Head of caudate nucleus (tissue), 42 donors: ENCODE measurements at regions of chr15 and their contacts with region 1.

Region 1: DNA sequence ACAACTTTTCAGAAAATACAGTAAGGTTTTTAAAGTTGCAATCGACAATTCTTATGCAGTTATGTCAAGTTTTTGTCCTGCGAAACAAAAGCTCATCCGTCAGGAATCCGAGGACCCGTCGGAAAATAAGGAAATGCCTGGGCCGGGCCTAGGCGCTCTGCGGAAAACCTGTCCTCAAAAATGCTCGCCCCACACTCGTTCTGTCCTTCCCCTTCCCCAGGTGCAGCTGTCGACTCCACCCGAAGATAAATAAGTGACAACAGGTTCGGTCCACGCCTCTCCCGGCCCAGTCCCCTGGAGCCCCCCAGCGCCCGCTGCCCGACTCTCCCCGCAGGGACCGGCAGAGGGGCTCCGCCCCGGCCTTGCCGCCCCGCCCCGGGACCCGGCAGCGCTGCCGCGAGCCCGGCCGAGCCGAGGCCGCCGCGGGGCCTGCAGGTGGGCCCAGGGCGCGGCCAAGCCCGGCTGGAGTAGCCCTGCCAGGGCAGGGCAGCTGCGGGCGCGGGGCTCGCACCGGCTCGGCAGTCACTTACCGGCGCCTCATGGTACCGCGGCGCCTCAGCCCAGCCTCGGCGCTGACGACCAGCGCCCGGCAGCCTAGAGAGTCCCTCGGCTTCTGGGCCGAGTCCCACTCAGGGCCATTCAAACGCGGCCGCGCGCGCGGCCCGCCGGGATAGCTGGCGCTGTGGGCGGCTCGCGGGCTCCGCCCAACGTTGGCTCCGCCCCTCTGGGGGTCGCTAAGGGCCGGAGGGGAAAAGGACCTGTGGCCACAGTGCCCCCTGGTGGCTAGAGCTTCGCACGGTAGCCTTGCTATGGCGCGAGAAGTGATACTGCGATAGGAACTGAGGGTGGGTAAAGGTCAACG is at the start of gene KATNBL1:
- DNase-seq: peak; percentile 90 to 99 (median 96)

Region 2: GRCh38 chr15:33888176-33888575 is 321.5 kb before region 1 on chr15:
- intact Hi-C with region 1: no loop called
- DNase-seq: no peak

Region 3: GRCh38 chr15:33959844-33960548 is 249.7 kb before region 1 on chr15:
- intact Hi-C with region 1: no loop called
- DNase-seq: peak in 2 of 42 donors; percentile 3 to 31

Region 4: DNA sequence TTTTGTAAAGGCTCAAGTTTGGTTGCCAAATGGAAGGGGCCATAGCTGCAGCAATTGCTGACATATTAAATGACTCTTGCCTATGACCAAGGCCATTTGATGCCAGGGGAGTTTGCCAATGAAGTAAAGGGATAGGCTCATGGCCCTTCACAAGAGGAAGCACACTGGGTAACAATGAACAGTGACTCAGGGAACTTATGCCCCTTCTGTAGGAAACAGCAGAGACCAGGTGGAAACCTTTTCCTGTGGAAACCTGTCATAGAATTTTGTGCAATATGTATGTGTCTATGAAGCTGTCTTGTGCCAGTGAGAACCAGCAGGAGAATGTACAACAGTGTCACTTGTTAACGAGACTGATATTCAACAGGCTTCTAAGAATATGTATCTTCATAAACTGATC is 145.2 kb before region 1 on chr15:
- intact Hi-C with region 1: loop called (anchors 5 kb)
- DNase-seq: no peak

Region 5: DNA sequence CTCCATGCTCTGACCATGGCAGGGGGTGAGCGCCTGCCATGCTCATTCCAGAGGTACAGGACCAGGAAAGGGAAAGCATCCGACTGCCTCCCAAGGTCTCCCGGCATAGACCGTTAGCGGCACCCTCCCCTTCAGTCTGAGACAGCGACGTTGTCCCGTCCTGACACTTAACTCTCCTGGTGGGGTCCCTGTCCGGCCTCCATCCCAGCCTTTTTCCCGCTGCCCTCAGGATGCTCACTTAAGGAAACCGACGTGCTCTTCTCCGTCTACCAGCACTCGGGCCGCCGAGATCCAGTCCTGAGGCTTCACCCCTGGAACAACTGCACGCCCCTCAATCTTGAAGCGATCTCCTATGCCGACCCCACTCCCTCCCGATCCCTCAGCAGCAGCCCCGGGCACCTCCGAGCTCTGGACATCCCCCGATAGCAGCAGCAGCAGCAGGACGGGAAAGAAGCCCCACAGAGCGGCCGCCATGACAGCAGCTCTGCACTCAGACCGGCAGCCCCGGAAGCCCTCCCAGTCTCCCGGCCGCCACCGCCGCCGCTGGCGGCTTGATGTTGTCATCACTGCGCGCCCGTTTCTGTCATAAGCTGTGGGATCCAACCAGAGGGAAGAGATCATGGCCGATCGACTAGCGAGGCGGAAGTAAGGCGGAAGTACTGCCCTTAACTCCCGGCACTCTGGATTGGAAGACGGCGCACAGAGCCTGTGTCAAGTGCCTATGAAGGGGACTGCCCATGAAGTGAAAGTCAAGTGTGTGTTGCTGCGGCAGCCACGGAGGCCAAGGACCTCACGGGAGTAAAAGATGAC is 108.1 kb before region 1 on chr15 and contains the starts of genes EMC7 and PGBD4:
- intact Hi-C with region 1: loop called (anchors 5 kb)
- DNase-seq: peak; percentile 96 to 100 (median 99)

Region 6: DNA sequence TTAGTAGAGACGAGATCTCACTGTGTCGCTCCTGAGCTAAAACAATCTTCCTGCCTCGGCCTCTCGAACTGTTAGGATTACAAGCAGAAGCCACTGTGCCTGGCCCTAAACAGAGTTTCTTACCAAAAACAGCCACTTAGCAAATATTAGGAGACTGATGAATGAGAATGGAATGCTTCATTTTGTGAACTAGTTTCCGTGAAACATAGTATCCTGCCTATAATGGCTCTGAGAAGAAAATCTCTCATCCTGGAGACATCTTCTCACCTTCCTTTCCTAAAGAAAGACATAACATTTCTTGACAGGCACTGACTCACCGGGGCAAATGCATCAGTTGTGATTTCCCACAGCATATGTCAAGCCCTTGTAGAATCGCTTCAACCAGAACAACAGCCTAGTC is 500.2 kb after region 1 on chr15:
- intact Hi-C with region 1: no loop called
- DNase-seq: no peak